Activated CD4-positive, alpha-beta T cell treated with anti-CD3 and anti-CD28 coated beads for 36 hours (primary cell): ENCODE measurements at regions of chr5 and their contacts with region 1.

Region 1: DNA sequence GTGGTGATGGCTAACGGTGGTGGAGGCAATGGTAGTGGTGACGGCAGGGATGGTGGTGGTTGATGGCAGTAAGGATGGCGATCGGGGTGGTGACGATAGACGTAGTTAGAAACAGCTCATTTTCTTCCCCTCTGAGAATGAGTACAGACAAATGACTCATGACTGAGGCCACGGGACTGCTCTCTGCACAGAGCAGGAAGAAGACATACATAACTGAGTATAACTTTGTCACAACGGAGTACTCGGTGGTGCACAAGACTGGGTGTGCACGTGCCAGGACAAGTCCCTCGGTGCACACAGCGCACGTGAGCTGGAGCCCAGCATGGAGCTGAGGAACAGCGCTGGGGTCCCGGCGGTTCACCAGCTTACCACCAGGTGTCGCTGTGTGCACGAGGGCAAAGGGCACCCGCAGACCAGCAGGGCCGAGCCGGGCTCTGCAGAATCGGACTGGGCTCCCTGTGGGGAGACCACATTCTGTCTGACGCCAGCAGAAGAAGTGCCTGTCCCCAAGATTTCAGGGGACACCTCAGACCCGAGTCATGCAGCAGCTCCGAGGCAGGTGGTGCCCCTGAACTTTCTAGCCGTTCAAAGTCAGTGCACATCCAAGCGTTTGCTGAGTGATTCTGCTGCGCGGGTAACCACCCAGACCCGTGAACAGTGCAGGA is 188.6 kb downstream of the FSTL4 start:
- DNase-seq: peak; percentile 87
- ATAC-seq: peak; percentile 96
- H3K4me3 Mint-ChIP-seq: no peak overlapping the region
- H3K27ac Mint-ChIP-seq: peak overlapping the region; percentile 26
- H3K4me1 Mint-ChIP-seq: peaks cover 9% of the 10 kb centered on the region
- H3K27me3 Mint-ChIP-seq: peaks cover 13% of the 10 kb centered on the region

Region 2: DNA sequence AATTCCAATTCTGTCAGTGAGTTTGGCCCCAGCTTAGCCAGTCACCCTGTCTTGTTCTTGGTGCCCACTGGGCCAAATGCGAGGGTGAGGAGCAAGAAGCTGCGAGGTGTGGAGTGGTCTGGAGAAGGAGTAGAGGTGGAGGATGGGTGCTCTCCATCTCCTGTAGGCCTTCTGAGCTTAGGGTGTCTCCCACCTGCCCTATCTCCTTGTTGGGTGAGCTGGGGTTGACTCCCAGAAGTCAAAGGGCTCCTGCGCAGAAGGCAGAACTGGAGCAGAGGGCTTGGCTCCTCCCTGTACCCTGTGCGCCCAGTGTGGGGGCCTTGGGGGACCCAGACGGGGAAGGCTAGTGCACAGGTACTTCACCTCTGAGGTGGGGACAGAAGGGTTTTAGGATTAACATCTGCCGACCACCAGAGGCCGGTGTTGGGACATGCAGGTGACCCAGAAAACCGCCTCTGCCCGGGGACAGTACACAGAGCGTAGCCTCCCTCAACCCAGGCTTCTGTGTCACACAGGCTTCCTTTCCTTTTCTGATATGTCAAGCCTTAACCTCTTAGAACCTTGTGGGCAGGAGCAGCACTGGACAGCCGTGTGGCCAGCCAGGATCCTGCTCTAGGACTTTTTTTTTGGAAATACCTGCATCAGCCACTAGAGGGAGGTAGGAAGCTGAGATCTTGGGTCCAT is 897.3 kb before region 1 on chr5:
- CTCF ChIA-PET with region 1: no interaction called
- POLR2A ChIA-PET with region 1: no interaction called
- intact Hi-C with region 1: no loop called
- DNase-seq: peak; percentile 60
- ATAC-seq: peak; percentile 34
- H3K4me3 Mint-ChIP-seq: no peak overlapping the region
- H3K27ac Mint-ChIP-seq: no peak overlapping the region
- H3K4me1 Mint-ChIP-seq: peaks cover 39% of the 10 kb centered on the region
- H3K27me3 Mint-ChIP-seq: peaks cover 3% of the 10 kb centered on the region

Region 3: DNA sequence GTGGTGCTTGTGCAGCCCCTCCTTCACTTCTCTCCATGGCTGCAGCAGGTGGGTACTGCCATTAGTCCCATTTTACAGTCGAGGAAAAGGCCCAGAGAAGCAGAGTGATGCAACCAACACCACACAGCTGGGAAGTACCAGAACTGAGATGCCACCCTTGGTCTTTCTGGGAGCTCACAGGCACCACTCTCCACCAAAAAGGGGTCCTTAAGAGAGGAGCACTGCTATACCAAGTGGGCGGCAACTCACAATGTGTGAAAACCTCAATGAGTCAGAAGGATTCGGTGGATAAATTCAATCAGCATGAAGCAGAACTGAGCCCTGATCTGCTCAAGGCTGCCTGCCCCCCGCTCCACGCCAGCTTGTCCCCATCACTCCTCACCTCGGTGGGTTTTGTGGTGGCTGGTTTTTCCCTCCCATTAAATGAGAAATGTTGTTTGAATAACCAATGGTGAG is 25.1 kb before region 1 on chr5:
- CTCF ChIA-PET with region 1: interaction called, 6 read pairs
- POLR2A ChIA-PET with region 1: no interaction called
- intact Hi-C with region 1: loop called (anchors 1 kb)
- DNase-seq: peak; percentile 76
- ATAC-seq: peak; percentile 93
- H3K4me3 Mint-ChIP-seq: no peak overlapping the region
- H3K27ac Mint-ChIP-seq: no peak overlapping the region
- H3K4me1 Mint-ChIP-seq: peaks cover 33% of the 10 kb centered on the region
- H3K27me3 Mint-ChIP-seq: no peaks in the 10 kb centered on the region

Region 4: DNA sequence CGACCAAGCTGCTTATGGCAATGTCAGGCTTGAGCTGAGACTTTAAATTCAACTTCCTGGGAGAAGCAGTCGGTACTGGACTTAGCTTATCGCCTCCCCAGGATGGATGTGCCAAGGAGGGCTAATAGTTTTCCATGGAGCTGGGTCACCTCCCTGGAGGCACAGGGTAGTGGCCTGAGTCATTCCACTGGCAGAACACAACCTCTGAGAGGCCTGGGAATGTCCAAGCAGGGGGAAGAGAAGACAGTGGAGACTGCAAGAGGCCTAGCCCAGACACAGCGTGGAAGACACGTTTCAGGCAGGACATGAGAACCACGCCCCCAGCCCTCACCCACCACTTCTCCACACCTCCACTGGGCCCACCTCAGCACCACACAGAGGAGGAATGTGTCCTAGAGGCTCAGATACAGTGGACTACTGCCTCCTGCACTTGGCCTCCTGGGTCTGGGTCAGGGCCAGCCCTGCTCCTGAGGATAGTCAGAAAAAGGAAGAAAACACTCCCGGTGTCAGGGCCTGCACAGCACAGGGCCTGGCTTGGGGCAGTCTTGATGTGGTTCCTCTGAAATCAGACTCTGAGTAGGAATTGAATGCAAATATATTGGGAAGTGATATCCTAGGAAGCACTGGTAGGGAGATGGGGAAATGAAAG is 16.8 kb after region 1 on chr5:
- CTCF ChIA-PET with region 1: interaction called, 11 read pairs
- POLR2A ChIA-PET with region 1: no interaction called
- intact Hi-C with region 1: no loop called
- DNase-seq: no peak
- ATAC-seq: no peak
- H3K4me3 Mint-ChIP-seq: no peak overlapping the region
- H3K27ac Mint-ChIP-seq: no peak overlapping the region
- H3K4me1 Mint-ChIP-seq: no peaks in the 10 kb centered on the region
- H3K27me3 Mint-ChIP-seq: peaks cover 5% of the 10 kb centered on the region

Region 5: GRCh38 chr5:133460172-133460758 is 36.5 kb after region 1 on chr5:
- CTCF ChIA-PET with region 1: interaction called, 4 read pairs
- POLR2A ChIA-PET with region 1: no interaction called
- intact Hi-C with region 1: loop called (anchors 1 to 2 kb)
- DNase-seq: peak; percentile 74
- ATAC-seq: peak; percentile 49
- H3K4me3 Mint-ChIP-seq: no peak overlapping the region
- H3K27ac Mint-ChIP-seq: no peak overlapping the region
- H3K4me1 Mint-ChIP-seq: peaks cover 4% of the 10 kb centered on the region
- H3K27me3 Mint-ChIP-seq: no peaks in the 10 kb centered on the region

Region 6: GRCh38 chr5:133610489-133611356 is 187.0 kb after region 1 on chr5:
- CTCF ChIA-PET with region 1: interaction called, 6 read pairs
- POLR2A ChIA-PET with region 1: no interaction called
- intact Hi-C with region 1: loop called in 1 of 2 experiments (anchors 5 kb)
- DNase-seq: peak; percentile 72
- ATAC-seq: peak; percentile 79
- H3K4me3 Mint-ChIP-seq: peak overlapping the region; percentile 49
- H3K27ac Mint-ChIP-seq: no peak overlapping the region
- H3K4me1 Mint-ChIP-seq: peaks cover 9% of the 10 kb centered on the region
- H3K27me3 Mint-ChIP-seq: peaks cover 58% of the 10 kb centered on the region